Endothelial cell of umbilical vein (primary cell): ENCODE measurements at regions of chr17 and their contacts with region 1.

Region 1: DNA sequence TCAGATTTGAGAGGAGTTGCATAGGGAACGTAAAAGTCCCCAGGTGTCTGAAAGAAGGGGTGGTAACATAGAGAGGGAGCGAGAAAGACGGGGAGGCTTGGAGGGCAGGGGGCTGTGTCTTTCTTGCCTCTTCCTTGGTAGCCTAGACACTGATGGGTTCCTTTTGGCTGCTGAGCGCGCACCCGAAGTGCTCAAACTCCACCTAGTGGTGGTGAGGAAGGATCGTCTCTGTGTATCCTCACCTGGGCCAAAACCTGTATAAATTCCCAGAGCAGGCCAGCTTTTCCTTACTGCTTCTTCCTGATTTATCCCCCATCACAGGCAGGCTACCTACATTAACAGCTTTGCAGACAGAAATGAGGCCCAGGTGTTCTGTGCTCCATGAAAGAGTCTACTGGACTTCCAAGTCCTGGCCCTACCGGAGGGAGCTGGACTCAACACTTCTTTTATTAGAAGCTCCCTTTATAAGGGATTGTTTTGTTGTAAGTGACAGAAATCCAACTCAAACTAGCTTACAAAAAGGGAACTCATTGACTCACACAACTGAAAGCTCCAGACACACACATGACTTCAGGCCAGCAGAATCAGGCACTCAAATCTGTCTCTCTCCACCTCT is 5.5 kb upstream of the SLC25A35 start:
- DNase-seq: peak; percentile 58
- H3K4me3 ChIP-seq: no peak overlapping the region
- H3K27ac ChIP-seq: no peak overlapping the region
- H3K4me1 ChIP-seq: no peaks in the 10 kb centered on the region
- H3K27me3 ChIP-seq: no peaks in the 10 kb centered on the region
- CTCF ChIP-seq: peak; percentile 80 to 89
- POLR2A ChIP-seq: no peak

Region 2: DNA sequence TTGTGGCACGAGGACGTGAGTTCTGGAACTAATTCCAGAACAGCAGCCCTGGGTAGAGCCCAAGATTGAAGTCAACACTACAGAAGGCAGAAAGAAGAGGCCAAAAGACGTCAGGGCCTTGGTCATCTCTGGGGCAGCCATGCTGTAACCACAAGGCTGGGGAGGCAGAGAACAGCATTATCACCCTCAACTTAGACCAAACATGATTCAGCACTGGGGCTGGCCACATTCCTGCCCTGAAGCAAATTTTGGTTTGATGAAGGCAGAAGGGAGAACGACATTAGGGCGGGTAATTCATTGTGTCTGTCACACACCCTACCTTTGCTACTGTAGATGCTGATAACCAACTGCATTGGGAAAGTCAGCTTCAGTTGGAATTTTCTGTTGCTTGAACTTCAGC is 271.6 kb before region 1 on chr17:
- CTCF ChIA-PET with region 1: no interaction called
- POLR2A ChIA-PET with region 1: no interaction called
- dilution Hi-C with region 1: no loop called
- intact Hi-C with region 1: no loop called
- DNase-seq: no peak
- H3K4me3 ChIP-seq: no peak overlapping the region
- H3K27ac ChIP-seq: no peak overlapping the region
- H3K4me1 ChIP-seq: no peaks in the 10 kb centered on the region
- H3K27me3 ChIP-seq: peaks cover 9 to 10% of the 10 kb centered on the region in 2 experiments
- CTCF ChIP-seq: no peak
- POLR2A ChIP-seq: no peak

Region 3: DNA sequence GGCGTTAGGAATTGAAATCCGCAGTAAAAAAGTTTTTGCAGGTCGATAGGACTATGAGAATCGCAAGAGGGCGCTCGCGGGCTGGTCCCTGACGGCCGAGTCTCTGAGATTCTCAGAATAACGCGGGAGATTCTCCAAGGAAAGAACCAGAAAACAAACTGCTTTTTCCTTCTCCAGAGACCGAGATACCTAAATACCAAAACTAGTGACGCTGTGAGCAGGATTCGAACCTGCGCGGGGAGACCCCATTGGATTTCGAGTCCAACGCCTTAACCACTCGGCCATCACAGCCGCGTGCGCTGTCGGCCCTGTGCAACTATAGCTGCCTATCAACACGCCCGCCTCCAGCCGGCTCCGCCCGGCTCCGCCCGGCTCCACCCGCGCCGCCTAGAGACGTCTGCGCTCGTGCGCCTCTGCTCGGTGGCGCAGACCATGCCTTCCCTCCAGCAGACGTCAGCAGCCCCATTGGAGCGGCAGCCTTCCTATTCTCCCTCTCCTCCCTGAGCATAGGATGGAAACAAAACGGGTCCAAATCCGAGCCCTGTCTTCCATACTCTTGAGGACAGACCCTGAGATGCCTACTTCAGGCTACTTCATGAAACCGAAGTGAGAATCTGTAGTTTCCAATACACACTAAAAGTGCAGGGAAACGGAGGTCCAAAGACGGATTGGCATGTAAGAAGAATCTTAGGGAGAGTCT is 161.9 kb before region 1 on chr17:
- CTCF ChIA-PET with region 1: interaction called, 3 read pairs
- POLR2A ChIA-PET with region 1: no interaction called
- dilution Hi-C with region 1: no loop called
- intact Hi-C with region 1: loop called (anchors 1 kb)
- DNase-seq: peak; percentile 98
- H3K4me3 ChIP-seq: peak overlapping the region; percentile 26 to 89 (median 80)
- H3K27ac ChIP-seq: peak overlapping the region; percentile 88
- H3K4me1 ChIP-seq: peaks cover 14% of the 10 kb centered on the region
- H3K27me3 ChIP-seq: no peaks in the 10 kb centered on the region
- CTCF ChIP-seq: peak; percentile 83 to 91
- POLR2A ChIP-seq: no peak

Region 4: GRCh38 chr17:8189711-8190477 is 110.8 kb before region 1 on chr17 and contains the start of gene BORCS6:
- CTCF ChIA-PET with region 1: interaction called, 4 read pairs
- POLR2A ChIA-PET with region 1: no interaction called
- dilution Hi-C with region 1: no loop called
- intact Hi-C with region 1: loop called (anchors 2 kb)
- DNase-seq: peak; percentile 98
- H3K4me3 ChIP-seq: peak within 1 kb of the TSS; percentile 45 to 66 (median 49)
- H3K27ac ChIP-seq: peak within 1 kb of the TSS; percentile 65
- H3K4me1 ChIP-seq: peaks cover 27% of the 10 kb centered on the region
- H3K27me3 ChIP-seq: no peaks in the 10 kb centered on the region
- CTCF ChIP-seq: peak in 1 of 2 donors; percentile 5
- POLR2A ChIP-seq: no peak
- total RNA-seq, gene BORCS6: 8.3 and 9.0 TPM in 2 replicates

Region 5: DNA sequence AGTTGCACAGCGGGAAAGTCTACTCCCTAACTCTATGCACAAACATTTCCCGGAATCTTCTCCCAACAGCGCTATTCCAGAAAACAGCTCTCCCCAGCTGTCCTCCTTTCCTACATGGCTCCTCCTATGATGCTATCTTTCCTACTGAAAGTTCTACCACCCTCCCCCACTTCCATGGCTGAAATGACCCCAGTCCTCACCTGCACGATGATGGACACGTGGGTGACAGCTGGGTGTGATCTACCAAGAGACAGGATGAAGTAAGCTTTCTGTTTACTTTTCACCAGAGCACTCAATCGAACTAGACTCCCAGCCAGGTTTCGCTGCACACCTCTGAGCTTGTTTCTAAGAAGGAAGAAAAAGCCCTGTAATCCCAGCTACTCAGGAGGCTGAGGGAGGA is 63.6 kb before region 1 on chr17:
- CTCF ChIA-PET with region 1: interaction called, 3 read pairs
- POLR2A ChIA-PET with region 1: no interaction called
- dilution Hi-C with region 1: loop called (anchors 10 kb)
- intact Hi-C with region 1: no loop called
- DNase-seq: no peak
- H3K4me3 ChIP-seq: no peak overlapping the region
- H3K27ac ChIP-seq: no peak overlapping the region
- H3K4me1 ChIP-seq: no peaks in the 10 kb centered on the region
- H3K27me3 ChIP-seq: no peaks in the 10 kb centered on the region
- CTCF ChIP-seq: no peak
- POLR2A ChIP-seq: no peak

Region 6: GRCh38 chr17:8248751-8249607 is 51.8 kb before region 1 on chr17 and contains the start of gene PFAS:
- CTCF ChIA-PET with region 1: interaction called, 16 read pairs
- POLR2A ChIA-PET with region 1: no interaction called
- dilution Hi-C with region 1: no loop called
- intact Hi-C with region 1: loop called (anchors 1 kb)
- DNase-seq: peak; percentile 90
- H3K4me3 ChIP-seq: peak within 1 kb of the TSS; percentile 69 to 98 (median 80)
- H3K27ac ChIP-seq: peak within 1 kb of the TSS; percentile 73
- H3K4me1 ChIP-seq: peaks cover 14% of the 10 kb centered on the region
- H3K27me3 ChIP-seq: no peaks in the 10 kb centered on the region
- CTCF ChIP-seq: peak in 1 of 2 donors; percentile 6
- POLR2A ChIP-seq: peak; percentile 79
- total RNA-seq, gene PFAS: 84.1 and 108 TPM in 2 replicates

Region 7: DNA sequence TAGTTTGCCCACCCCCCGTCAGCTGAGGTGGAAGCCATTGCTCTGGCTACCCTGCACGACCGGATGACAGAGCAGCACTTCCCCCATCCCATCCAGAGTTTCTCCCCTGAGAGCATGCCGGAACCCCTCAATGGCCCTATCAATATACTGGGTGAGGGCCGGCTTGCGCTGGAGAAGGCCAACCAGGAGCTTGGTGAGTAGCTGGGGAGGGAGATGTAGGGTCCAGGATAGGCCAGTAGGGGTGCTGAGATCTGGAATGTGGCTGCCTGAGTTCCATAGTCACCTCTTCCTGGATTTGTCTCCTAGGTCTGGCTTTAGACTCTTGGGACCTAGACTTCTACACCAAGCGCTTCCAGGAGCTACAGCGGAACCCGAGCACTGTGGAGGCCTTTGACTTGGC is 45.2 kb before region 1 on chr17:
- CTCF ChIA-PET with region 1: interaction called, 16 read pairs
- POLR2A ChIA-PET with region 1: no interaction called
- dilution Hi-C with region 1: no loop called
- intact Hi-C with region 1: loop called (anchors 1 kb)
- DNase-seq: no peak
- H3K4me3 ChIP-seq: no peak overlapping the region
- H3K27ac ChIP-seq: no peak overlapping the region
- H3K4me1 ChIP-seq: no peaks in the 10 kb centered on the region
- H3K27me3 ChIP-seq: no peaks in the 10 kb centered on the region
- CTCF ChIP-seq: peak in 1 of 2 donors; percentile 22
- POLR2A ChIP-seq: no peak

Region 8: GRCh38 chr17:8288336-8289102 is 12.2 kb before region 1 on chr17 and contains the start of gene RANGRF:
- CTCF ChIA-PET with region 1: interaction called, 10 read pairs
- POLR2A ChIA-PET with region 1: interaction called, 3 read pairs
- dilution Hi-C with region 1: no loop called
- intact Hi-C with region 1: no loop called
- DNase-seq: peak; percentile 82
- H3K4me3 ChIP-seq: peak within 1 kb of the TSS; percentile 71 to 75 (median 74)
- H3K27ac ChIP-seq: peak within 1 kb of the TSS; percentile 63
- H3K4me1 ChIP-seq: peaks cover 15% of the 10 kb centered on the region
- H3K27me3 ChIP-seq: no peaks in the 10 kb centered on the region
- CTCF ChIP-seq: no peak
- POLR2A ChIP-seq: no peak
- total RNA-seq, gene RANGRF: 36.5 and 36.8 TPM in 2 replicates

Region 9: DNA sequence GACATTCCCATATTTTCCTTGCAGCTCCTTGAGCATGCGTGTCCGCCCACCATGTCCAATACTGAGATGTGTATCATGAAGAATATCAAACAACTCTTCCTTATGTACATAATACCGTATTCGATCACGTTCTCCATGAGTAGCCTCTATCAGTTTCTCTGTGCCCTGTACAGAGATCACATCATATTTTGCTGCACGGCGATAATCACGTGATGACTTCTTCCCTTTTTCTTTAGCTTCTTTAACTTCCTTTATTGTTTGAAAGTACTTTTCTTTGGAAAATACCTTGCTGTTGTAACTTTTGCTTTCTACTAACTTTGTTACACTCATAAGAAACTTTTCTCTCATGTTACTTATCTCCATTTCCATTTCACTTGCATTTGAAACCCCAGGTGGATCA is 69.2 kb after region 1 on chr17:
- CTCF ChIA-PET with region 1: no interaction called
- POLR2A ChIA-PET with region 1: no interaction called
- dilution Hi-C with region 1: no loop called
- intact Hi-C with region 1: no loop called
- DNase-seq: no peak
- H3K4me3 ChIP-seq: no peak overlapping the region
- H3K27ac ChIP-seq: no peak overlapping the region
- H3K4me1 ChIP-seq: peaks cover 19% of the 10 kb centered on the region
- H3K27me3 ChIP-seq: no peaks in the 10 kb centered on the region
- CTCF ChIP-seq: no peak
- POLR2A ChIP-seq: no peak

Region 10: GRCh38 chr17:8393420-8394241 is 92.9 kb after region 1 on chr17:
- CTCF ChIA-PET with region 1: no interaction called
- POLR2A ChIA-PET with region 1: no interaction called
- dilution Hi-C with region 1: no loop called
- intact Hi-C with region 1: no loop called
- DNase-seq: no peak
- H3K4me3 ChIP-seq: no peak overlapping the region
- H3K27ac ChIP-seq: no peak overlapping the region
- H3K4me1 ChIP-seq: peaks cover 4% of the 10 kb centered on the region
- H3K27me3 ChIP-seq: peaks cover 13 to 18% of the 10 kb centered on the region in 2 experiments
- CTCF ChIP-seq: no peak
- POLR2A ChIP-seq: no peak